Naive thymus-derived CD4-positive, alpha-beta T cell (primary cell): ENCODE measurements at regions of chr12 and their contacts with region 1.

Region 1: GRCh38 chr12:102061560-102062418 is at the start of gene WASHC3:
- DNase-seq: peak; percentile 87 to 96 (median 93)
- ATAC-seq: peak; percentile 97
- H3K4me3 ChIP-seq: peak within 1 kb of the TSS; percentile 89
- H3K4me3 Mint-ChIP-seq: peak within 1 kb of the TSS; percentile 84 to 99 (median 97)
- H3K27ac ChIP-seq: peak within 1 kb of the TSS; percentile 86
- H3K27ac Mint-ChIP-seq: peak within 1 kb of the TSS; percentile 94 to 100 (median 99)
- H3K4me1 ChIP-seq: peaks cover 16 to 17% of the 10 kb centered on the region in 2 donors
- H3K4me1 Mint-ChIP-seq: peaks cover 15 to 54% (median 49%) of the 10 kb centered on the region in 7 donors
- H3K27me3 ChIP-seq: no peaks in the 10 kb centered on the region
- H3K27me3 Mint-ChIP-seq: peaks cover 0 to 21% (median 5%) of the 10 kb centered on the region in 5 donors
- total RNA-seq, gene WASHC3: 32.8 to 59.6 (median 49.6) TPM

Region 2: DNA sequence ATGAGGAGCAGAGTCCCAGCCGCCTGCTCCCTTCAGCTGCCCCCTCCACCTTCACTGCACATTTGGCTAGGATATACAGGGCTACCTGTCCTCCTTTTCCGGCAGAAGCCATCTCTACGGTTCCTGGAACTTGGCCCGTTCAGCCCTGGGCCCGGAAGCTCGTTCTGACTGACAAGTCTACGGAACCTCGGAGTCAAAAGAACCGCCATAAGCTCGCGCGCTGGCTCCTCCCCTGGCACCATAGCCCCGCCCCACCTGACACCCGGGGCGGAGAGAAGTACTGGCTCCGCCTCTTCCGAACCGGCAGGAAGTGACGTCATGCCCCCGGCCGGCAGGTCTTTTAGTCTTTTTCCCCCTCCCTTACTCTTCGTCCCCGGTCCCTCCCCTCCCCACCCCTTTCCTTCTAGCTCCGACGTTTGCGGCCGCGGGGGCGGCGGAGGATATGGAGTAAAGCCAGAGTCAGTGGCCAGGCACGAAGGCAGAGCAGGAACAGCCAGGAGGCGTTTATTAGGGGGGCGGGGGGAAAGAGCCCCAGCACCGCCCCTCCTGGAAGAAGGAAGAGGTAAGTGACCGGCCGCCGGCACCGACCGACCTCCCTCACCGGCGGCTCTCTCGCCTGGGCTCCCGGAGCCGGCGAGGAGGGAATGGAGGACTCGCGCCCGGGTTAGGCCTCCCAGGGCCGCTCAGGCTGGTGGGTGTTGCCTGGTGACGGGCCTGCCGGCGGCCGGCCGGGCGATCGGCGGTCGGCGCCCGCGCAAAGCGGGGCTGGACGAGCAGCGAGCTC is 1794.8 kb before region 1 on chr12 and contains the starts of genes DEPDC4 and SCYL2:
- CTCF ChIA-PET with region 1: no interaction called
- POLR2A ChIA-PET with region 1: no interaction called
- intact Hi-C with region 1: loop called (anchors 2 to 5 kb)
- DNase-seq: peak; percentile 94 to 99 (median 97)
- ATAC-seq: peak; percentile 95
- H3K4me3 ChIP-seq: peak within 1 kb of the TSS; percentile 98
- H3K4me3 Mint-ChIP-seq: peak within 1 kb of the TSS; percentile 94 to 100 (median 98)
- H3K27ac ChIP-seq: peak within 1 kb of the TSS; percentile 96
- H3K27ac Mint-ChIP-seq: peak within 1 kb of the TSS; percentile 89 to 100 (median 98)
- H3K4me1 ChIP-seq: peaks cover 11 to 19% of the 10 kb centered on the region in 2 donors
- H3K4me1 Mint-ChIP-seq: peaks cover 18 to 54% (median 33%) of the 10 kb centered on the region in 7 donors
- H3K27me3 ChIP-seq: no peaks in the 10 kb centered on the region
- H3K27me3 Mint-ChIP-seq: no peaks in the 10 kb centered on the region
- total RNA-seq, gene DEPDC4: 0.74 to 1.3 (median 0.92) TPM
- total RNA-seq, gene SCYL2: 32.6 to 49.4 (median 42.3) TPM

Region 3: DNA sequence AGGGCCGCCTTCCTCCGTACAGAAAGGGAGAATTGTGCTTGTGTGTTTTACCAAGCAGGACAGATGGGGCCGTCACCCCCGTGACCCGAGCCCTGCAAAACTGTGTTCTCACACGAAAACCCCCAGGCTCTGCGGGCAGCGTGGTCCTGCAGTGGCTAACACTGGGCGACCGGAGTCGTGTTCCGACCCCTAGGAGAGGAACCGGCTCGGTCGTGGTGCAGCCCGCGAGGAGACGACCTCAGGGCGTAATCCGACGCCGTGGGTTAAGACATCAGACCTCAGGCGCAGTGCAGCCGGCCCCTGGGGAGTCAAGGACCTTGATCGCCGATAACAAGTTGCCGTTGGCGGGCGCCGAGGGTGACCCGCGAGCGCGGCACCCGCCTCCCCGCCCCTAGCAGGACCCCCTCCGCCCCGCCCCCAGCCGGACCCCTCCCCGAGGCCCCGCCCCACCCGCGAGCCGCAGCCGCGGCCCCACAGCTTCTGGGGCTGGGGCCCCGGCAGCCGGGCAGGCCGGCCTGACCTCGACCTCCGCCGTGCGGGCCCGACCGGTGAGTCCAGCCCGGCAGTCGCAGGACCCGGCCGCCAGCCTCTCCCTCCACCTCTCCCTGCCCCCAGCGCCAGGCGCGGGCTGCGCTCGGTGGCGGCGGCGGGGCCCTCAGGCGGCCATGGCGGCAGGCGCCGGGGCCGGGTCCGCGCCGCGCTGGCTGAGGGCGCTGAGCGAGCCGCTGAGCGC is 364.4 kb before region 1 on chr12 and contains the start of gene CHPT1:
- CTCF ChIA-PET with region 1: no interaction called
- POLR2A ChIA-PET with region 1: no interaction called
- intact Hi-C with region 1: loop called in 1 of 2 experiments (anchors 2 kb)
- DNase-seq: peak; percentile 40 to 75 (median 58)
- ATAC-seq: peak; percentile 82
- H3K4me3 ChIP-seq: peak within 1 kb of the TSS; percentile 88
- H3K4me3 Mint-ChIP-seq: peak within 1 kb of the TSS; percentile 92 to 95 (median 94)
- H3K27ac ChIP-seq: peak within 1 kb of the TSS; percentile 70
- H3K27ac Mint-ChIP-seq: peak within 1 kb of the TSS; percentile 66 to 93 (median 90)
- H3K4me1 ChIP-seq: peaks cover 4 to 14% of the 10 kb centered on the region in 2 donors
- H3K4me1 Mint-ChIP-seq: peaks cover 17 to 61% (median 53%) of the 10 kb centered on the region in 7 donors
- H3K27me3 ChIP-seq: no peaks in the 10 kb centered on the region
- H3K27me3 Mint-ChIP-seq: peaks cover 0 to 23% (median 0%) of the 10 kb centered on the region in 5 donors
- total RNA-seq, gene CHPT1: 6.5 to 22.6 (median 14.5) TPM

Region 4: DNA sequence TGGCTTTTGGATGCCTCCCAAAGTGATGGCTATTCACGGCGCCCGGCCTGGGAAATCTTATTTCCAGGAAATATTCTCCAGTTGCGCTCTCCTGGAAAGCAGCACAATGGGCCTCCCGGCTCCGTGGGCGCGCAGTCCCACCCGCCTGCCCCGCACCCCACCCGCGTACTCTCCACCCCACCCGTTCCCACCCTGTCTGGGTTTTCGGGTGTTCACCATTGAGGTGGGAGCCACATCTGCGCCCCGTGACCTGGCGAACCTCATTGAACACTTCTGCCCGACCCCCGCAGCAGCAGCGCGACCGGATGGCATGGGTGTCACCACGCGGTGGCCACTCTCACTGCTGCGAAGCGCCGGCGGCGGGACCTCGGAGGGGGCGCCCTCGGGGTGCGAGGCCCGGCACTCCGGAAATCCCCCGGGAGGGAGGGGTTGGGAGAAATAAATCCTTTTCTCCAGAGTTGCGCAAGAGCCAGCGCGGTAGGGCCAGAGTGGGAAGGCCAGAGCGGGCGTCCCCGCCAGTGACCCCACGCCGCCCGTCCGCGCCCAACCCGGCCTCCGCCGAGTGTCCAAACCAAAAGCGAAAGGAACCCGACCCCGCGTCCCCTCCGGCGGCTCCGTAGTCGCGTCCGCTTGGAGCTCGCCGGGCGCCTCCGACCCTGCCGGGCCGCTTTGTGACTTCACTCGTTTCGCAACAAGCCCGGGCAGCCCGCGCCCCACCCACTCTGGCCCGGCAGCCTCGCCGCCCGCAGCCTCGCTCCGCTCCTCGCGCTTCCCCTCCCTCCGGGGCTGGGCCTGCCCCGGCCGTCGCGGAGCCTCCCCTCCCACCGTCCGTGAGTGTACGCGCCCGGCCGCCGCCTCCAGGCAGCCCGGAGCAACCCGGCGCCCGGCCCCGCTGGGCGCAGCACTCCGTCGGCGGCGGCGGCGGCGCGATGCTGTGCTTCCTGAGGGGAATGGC is 184.7 kb before region 1 on chr12 and contains the start of gene DRAM1:
- CTCF ChIA-PET with region 1: no interaction called
- POLR2A ChIA-PET with region 1: no interaction called
- intact Hi-C with region 1: loop called (anchors 1 to 5 kb)
- DNase-seq: peak; percentile 45 to 85 (median 61)
- ATAC-seq: peak; percentile 93
- H3K4me3 ChIP-seq: peak within 1 kb of the TSS; percentile 56
- H3K4me3 Mint-ChIP-seq: peak within 1 kb of the TSS; percentile 80 to 95 (median 92)
- H3K27ac ChIP-seq: peak within 1 kb of the TSS; percentile 78
- H3K27ac Mint-ChIP-seq: peak within 1 kb of the TSS; percentile 73 to 90 (median 84)
- H3K4me1 ChIP-seq: peaks cover 0 to 6% of the 10 kb centered on the region in 2 donors
- H3K4me1 Mint-ChIP-seq: peaks cover 8 to 18% (median 12%) of the 10 kb centered on the region in 7 donors
- H3K27me3 ChIP-seq: no peaks in the 10 kb centered on the region
- H3K27me3 Mint-ChIP-seq: peaks cover 0 to 4% (median 0%) of the 10 kb centered on the region in 5 donors
- total RNA-seq, gene DRAM1: 2.4 to 9.5 (median 2.6) TPM

Region 5: GRCh38 chr12:101929365-101930041 is 132.3 kb before region 1 on chr12:
- CTCF ChIA-PET with region 1: no interaction called
- POLR2A ChIA-PET with region 1: no interaction called
- intact Hi-C with region 1: no loop called
- DNase-seq: no peak
- ATAC-seq: no peak
- H3K4me3 ChIP-seq: no peak overlapping the region
- H3K4me3 Mint-ChIP-seq: no peak overlapping the region
- H3K27ac ChIP-seq: no peak overlapping the region
- H3K27ac Mint-ChIP-seq: no peak overlapping the region
- H3K4me1 ChIP-seq: no peaks in the 10 kb centered on the region
- H3K4me1 Mint-ChIP-seq: peaks cover 0 to 13% (median 0%) of the 10 kb centered on the region in 7 donors
- H3K27me3 ChIP-seq: no peaks in the 10 kb centered on the region
- H3K27me3 Mint-ChIP-seq: peaks cover 0 to 23% (median 20%) of the 10 kb centered on the region in 5 donors

Region 6: DNA sequence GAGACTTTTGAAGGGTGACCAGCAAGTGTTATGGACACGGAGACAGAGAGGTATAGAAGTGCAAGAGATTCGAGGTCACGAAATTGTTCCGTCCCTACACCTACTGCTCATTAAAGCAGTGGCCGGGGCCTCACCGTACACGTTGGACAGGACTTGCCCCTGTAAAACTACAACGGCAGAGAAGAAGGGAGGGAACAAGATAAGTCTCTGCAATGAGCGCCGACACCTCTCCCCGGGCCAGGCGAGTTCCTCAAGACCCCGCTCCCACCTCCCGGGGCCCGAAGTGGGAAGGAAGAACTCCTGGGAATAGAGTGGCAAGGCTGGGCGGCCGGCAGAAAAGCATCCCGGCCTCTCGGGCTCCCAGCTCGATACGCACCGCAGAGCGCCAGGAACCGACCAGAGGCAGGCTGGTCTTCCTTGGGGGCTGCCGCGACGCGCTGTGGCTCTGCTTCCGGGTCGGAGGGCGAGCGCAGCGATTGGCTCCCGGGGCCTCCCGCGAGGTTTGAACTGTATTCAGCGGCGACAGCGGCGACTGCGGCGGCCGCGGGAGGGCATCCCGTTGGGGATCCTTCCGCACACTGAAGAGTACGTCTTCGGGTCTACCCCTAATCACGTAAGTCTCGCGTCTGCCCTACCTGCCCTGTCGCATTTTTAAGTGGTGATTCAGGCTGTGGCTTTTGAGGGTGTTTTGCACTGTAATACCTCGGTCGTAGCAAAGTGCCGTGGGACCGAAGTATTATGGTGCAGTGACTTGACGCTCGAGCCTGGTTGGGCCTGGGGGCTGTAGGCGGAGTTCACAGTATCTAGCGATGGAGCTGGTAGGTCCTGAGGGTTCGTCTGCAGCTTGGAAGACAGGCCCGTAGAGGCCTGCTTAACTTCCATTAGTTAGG is 58.1 kb after region 1 on chr12 and contains the starts of genes NUP37 and PARPBP:
- CTCF ChIA-PET with region 1: no interaction called
- POLR2A ChIA-PET with region 1: interaction called, 16 read pairs
- intact Hi-C with region 1: loop called (anchors 1 kb)
- DNase-seq: peak; percentile 87 to 94 (median 91)
- ATAC-seq: peak; percentile 98
- H3K4me3 ChIP-seq: peak within 1 kb of the TSS; percentile 93
- H3K4me3 Mint-ChIP-seq: peak within 1 kb of the TSS; percentile 88 to 98 (median 93)
- H3K27ac ChIP-seq: peak within 1 kb of the TSS; percentile 91
- H3K27ac Mint-ChIP-seq: peak within 1 kb of the TSS; percentile 86 to 97 (median 92)
- H3K4me1 ChIP-seq: peaks cover 9 to 14% of the 10 kb centered on the region in 2 donors
- H3K4me1 Mint-ChIP-seq: peaks cover 14 to 49% (median 27%) of the 10 kb centered on the region in 7 donors
- H3K27me3 ChIP-seq: no peaks in the 10 kb centered on the region
- H3K27me3 Mint-ChIP-seq: no peaks in the 10 kb centered on the region
- total RNA-seq, gene NUP37: 11.9 to 47.5 (median 18.5) TPM
- total RNA-seq, gene PARPBP: 1.1 to 21.5 (median 1.5) TPM

Region 7: DNA sequence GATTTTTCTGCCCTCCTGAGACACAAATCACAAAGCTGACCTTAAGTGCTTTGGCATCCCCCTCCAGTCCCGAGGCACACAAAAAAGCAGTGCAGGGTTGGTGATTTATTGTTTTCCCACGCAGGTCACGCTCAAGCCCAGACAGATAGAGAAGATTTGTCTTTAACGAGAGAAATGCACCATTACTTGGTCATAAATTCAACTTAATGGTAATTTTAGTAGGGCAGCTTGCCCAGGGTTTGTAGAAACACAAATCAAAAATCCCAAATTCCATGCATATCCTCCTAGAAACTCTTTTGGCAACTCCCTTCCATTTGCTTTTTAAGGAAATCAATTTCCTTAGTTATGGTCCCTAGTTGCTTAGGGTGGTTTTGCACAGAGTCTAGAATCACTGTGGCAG is 286.0 kb after region 1 on chr12:
- CTCF ChIA-PET with region 1: no interaction called
- POLR2A ChIA-PET with region 1: no interaction called
- intact Hi-C with region 1: no loop called
- DNase-seq: no peak
- ATAC-seq: no peak
- H3K4me3 ChIP-seq: no peak overlapping the region
- H3K4me3 Mint-ChIP-seq: no peak overlapping the region
- H3K27ac ChIP-seq: no peak overlapping the region
- H3K27ac Mint-ChIP-seq: no peak overlapping the region
- H3K4me1 ChIP-seq: no peaks in the 10 kb centered on the region
- H3K4me1 Mint-ChIP-seq: peaks cover 0 to 4% (median 0%) of the 10 kb centered on the region in 7 donors
- H3K27me3 ChIP-seq: no peaks in the 10 kb centered on the region
- H3K27me3 Mint-ChIP-seq: peaks cover 1 to 15% (median 5%) of the 10 kb centered on the region in 5 donors

Region 8: GRCh38 chr12:102484428-102484958 is 422.7 kb after region 1 on chr12:
- CTCF ChIA-PET with region 1: no interaction called
- POLR2A ChIA-PET with region 1: no interaction called
- intact Hi-C with region 1: loop called in 1 of 2 experiments (anchors 10 kb)
- DNase-seq: peak in 8 of 9 donors; percentile 11 to 58 (median 34)
- ATAC-seq: peak; percentile 55
- H3K4me3 ChIP-seq: peak overlapping the region; percentile 25
- H3K4me3 Mint-ChIP-seq: peak overlapping the region; percentile 30 to 82 (median 70)
- H3K27ac ChIP-seq: no peak overlapping the region
- H3K27ac Mint-ChIP-seq: peak overlapping the region in 1 of 9 donors; percentile 89
- H3K4me1 ChIP-seq: peaks cover under 1 to 5% of the 10 kb centered on the region in 2 donors
- H3K4me1 Mint-ChIP-seq: peaks cover 0 to 35% (median 7%) of the 10 kb centered on the region in 7 donors
- H3K27me3 ChIP-seq: no peaks in the 10 kb centered on the region
- H3K27me3 Mint-ChIP-seq: peaks cover 0 to 19% (median 9%) of the 10 kb centered on the region in 5 donors

Region 9: GRCh38 chr12:103965590-103966504 is 1904.1 kb after region 1 on chr12 and contains the start of gene TDG:
- CTCF ChIA-PET with region 1: no interaction called
- POLR2A ChIA-PET with region 1: no interaction called
- intact Hi-C with region 1: loop called in 1 of 2 experiments (anchors 1 kb)
- DNase-seq: peak; percentile 81 to 97 (median 95)
- ATAC-seq: peak; percentile 97
- H3K4me3 ChIP-seq: peak within 1 kb of the TSS; percentile 87
- H3K4me3 Mint-ChIP-seq: peak within 1 kb of the TSS; percentile 92 to 99 (median 97)
- H3K27ac ChIP-seq: peak within 1 kb of the TSS; percentile 94
- H3K27ac Mint-ChIP-seq: peak within 1 kb of the TSS; percentile 96 to 100 (median 99)
- H3K4me1 ChIP-seq: peaks cover 31 to 41% of the 10 kb centered on the region in 2 donors
- H3K4me1 Mint-ChIP-seq: peaks cover 34 to 68% (median 57%) of the 10 kb centered on the region in 7 donors
- H3K27me3 ChIP-seq: no peaks in the 10 kb centered on the region
- H3K27me3 Mint-ChIP-seq: no peaks in the 10 kb centered on the region
- total RNA-seq, gene TDG: 21.5 to 43.0 (median 35.5) TPM